ENCODE measurements at regions of chr17 and their contacts with region 1.

Region 1: GRCh38 chr17:4980644-4981216 is 6.7 kb downstream of the CAMTA2 start:
- DNase-seq: no peak
- H3K4me3 ChIP-seq: no peak overlapping the region
- H3K27ac ChIP-seq: no peak overlapping the region
- H3K4me1 ChIP-seq: peaks cover 0 to 8% (median 0%) of the 10 kb centered on the region in 4 donors
- H3K27me3 ChIP-seq: no peaks in the 10 kb centered on the region
- CTCF ChIP-seq: peak; percentile 74 to 77

Region 2: GRCh38 chr17:4939796-4940624 is 40.7 kb before region 1 on chr17 and contains the starts of genes RNF167 and SLC25A11:
- intact Hi-C with region 1: loop called (anchors 5 kb)
- DNase-seq: peak; percentile 95 to 98
- H3K4me3 ChIP-seq: peak within 1 kb of the TSS; percentile 83 to 91
- H3K27ac ChIP-seq: peak within 1 kb of the TSS; percentile 85
- H3K4me1 ChIP-seq: peaks cover 4 to 54% (median 43%) of the 10 kb centered on the region in 4 donors
- H3K27me3 ChIP-seq: no peaks in the 10 kb centered on the region
- CTCF ChIP-seq: no peak

Region 3: GRCh38 chr17:5065227-5065744 is 84.6 kb after region 1 on chr17:
- intact Hi-C with region 1: loop called (anchors 2 kb)
- DNase-seq: no peak
- H3K4me3 ChIP-seq: no peak overlapping the region
- H3K27ac ChIP-seq: no peak overlapping the region
- H3K4me1 ChIP-seq: no peaks in the 10 kb centered on the region
- H3K27me3 ChIP-seq: peaks cover 0 to 6% of the 10 kb centered on the region in 2 donors
- CTCF ChIP-seq: no peak